ENCODE measurements at regions of chr4 and their contacts with region 1.

Region 1: DNA sequence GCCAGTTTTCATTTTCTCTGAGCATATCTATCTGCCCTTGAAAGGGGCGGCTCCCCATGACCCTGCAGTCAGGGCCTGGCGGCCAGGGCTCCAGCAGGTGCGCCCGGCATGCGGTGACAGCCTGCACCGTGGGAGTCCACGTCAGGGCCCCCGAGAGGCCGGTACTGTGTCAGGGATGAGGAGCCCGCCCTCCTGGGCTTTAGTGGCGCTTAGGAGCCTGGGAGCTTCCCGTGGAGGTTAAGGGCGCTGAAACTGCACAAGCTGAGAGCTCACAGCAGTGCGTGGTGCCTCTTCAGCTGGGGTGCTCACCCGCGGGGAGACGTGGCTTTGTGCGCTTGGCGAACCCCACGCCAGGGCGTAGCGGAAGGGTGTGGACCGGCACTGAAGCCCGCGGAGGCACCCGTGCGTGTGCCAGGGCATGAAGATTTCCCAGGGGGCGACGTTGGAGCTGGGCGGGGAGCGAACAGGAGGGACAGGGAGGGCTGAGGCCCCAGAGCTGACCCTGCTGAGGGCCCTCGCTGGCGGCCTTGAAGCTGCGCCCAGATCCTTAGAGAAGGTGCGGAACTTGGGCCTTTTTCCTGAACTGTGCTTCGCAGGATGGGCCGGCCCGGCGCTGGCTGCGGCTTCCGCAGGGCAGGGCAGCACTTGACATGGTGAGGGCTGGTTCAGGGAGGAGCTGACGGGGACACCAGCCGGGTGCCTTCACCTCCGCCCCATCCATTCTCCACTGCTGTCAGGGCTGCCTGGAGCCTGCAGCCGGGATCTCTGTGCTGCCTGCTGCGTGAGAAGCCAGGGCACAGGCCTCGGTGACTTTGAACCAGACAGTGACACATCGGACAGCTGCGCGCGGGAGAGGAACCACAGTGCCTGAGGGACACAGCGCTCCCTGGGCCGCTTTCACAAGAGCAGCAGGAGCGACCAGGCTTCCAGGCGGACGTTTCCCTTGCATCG is 32.9 kb downstream of the HTT-AS start:
- DNase-seq: peak; percentile 68 to 74
- H3K4me3 ChIP-seq: peak overlapping the region; percentile 50; the same call in 1 of the 2 replicates
- H3K27ac ChIP-seq: no peak overlapping the region
- H3K4me1 ChIP-seq: 0 out of 2 replicates have a peak, but pooled peaks cover 5% of the 10 kb centered on the region
- H3K27me3 ChIP-seq: no peaks in the 10 kb centered on the region
- CTCF ChIP-seq: no peak; the same call in 1 of the 2 replicates

Region 2: DNA sequence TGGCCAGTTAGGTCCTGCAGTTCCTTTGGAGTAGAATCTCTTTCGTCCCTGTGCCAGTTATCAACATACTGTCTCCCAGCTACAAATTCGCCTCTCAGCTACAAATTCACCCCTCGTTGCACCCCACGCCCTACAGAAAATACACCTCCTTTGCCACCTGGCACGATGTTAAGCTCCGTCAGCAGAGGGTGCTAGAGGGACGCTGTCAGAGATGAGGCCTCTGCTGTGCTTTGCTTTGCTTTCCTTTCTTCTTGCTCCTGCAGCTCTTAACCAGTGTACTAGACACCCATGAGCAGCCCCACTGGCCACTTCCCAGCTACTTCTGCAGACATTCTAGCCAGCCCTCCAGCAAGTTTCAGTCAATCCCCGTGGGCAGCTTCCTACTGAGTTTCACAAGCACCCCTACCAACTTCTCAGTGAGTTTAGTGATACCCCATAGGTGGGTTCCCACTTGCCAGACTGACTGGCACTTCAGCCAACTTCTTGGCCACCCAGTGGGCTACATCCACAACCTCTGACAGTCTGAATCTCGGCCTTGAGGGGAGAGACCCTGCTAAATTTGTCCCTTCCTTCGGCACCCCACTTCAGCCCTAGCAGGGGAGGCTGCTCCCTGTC is 821.3 kb before region 1 on chr4:
- CTCF ChIA-PET with region 1: no interaction called
- POLR2A ChIA-PET with region 1: no interaction called
- intact Hi-C with region 1: loop called (anchors 2 kb)
- DNase-seq: peak; percentile 60 to 73
- H3K4me3 ChIP-seq: no peak overlapping the region
- H3K27ac ChIP-seq: no peak overlapping the region
- H3K4me1 ChIP-seq: peaks cover 14% of the 10 kb centered on the region
- H3K27me3 ChIP-seq: no peaks in the 10 kb centered on the region
- CTCF ChIP-seq: peak; percentile 89

Region 3: GRCh38 chr4:2484993-2485392 is 556.5 kb before region 1 on chr4:
- CTCF ChIA-PET with region 1: no interaction called
- POLR2A ChIA-PET with region 1: no interaction called
- intact Hi-C with region 1: no loop called
- DNase-seq: no peak
- H3K4me3 ChIP-seq: no peak overlapping the region
- H3K27ac ChIP-seq: no peak overlapping the region
- H3K4me1 ChIP-seq: 0 out of 2 replicates have a peak, but pooled peaks cover 1% of the 10 kb centered on the region
- H3K27me3 ChIP-seq: no peaks in the 10 kb centered on the region
- CTCF ChIP-seq: no peak

Region 4: DNA sequence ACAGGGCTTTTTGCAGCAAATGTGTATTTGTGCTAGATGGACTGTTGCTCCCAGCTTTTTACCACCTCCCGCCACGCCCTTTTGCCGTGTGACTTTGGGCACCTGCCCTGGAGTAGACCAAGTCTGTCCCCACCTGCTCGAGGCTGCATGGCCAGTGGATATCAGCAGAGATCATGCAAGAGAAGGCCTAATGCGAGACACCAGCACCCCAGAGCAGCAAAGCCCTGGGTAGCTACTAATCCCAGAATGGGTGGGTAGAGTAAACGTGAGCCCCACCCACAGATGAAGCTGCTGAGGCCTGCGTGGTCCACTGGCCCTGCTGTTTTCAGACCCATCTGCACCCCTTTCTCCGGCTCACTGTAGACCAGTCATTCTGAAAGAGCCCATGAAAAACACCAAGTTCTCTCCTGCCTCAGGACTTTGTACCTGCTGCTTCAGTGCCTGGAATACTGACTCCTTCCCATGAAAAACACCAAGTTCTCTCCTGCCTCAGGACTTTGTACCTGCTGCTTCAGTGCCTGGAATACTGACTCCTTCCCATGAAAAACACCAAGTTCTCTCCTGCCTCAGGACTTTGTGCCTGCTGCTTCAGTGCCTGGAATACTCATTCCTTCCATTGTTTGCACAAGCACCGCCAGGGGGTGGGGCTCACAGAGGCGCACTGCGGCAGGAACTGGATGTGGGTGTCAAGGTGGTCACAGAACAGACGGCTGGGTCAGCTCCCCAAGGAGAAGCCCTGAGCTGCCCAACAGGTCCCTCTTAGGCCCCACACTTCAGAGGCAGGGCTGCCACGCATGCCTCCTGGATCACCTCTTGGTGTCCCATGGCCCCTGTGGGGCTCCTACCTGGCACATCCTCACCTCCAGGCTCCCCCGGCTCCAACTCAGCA is 280.2 kb before region 1 on chr4:
- CTCF ChIA-PET with region 1: no interaction called
- POLR2A ChIA-PET with region 1: no interaction called
- intact Hi-C with region 1: loop called (anchors 5 kb)
- DNase-seq: peak in 1 of 2 experiments; percentile 57
- H3K4me3 ChIP-seq: no peak overlapping the region
- H3K27ac ChIP-seq: no peak overlapping the region
- H3K4me1 ChIP-seq: no peaks in the 10 kb centered on the region
- H3K27me3 ChIP-seq: no peaks in the 10 kb centered on the region
- CTCF ChIP-seq: no peak

Region 5: GRCh38 chr4:2934813-2935761 is 106.4 kb before region 1 on chr4:
- CTCF ChIA-PET with region 1: interaction called, 4 read pairs
- POLR2A ChIA-PET with region 1: interaction called, 20 read pairs
- intact Hi-C with region 1: no loop called
- DNase-seq: peak; percentile 63 to 94
- H3K4me3 ChIP-seq: peak overlapping the region; percentile 65
- H3K27ac ChIP-seq: peak overlapping the region; percentile 71
- H3K4me1 ChIP-seq: peaks cover 26% of the 10 kb centered on the region
- H3K27me3 ChIP-seq: no peaks in the 10 kb centered on the region
- CTCF ChIP-seq: no peak

Region 6: GRCh38 chr4:2948895-2949765 is 92.3 kb before region 1 on chr4:
- CTCF ChIA-PET with region 1: interaction called, 4 read pairs
- POLR2A ChIA-PET with region 1: no interaction called
- intact Hi-C with region 1: loop called (anchors 1 kb)
- DNase-seq: no peak
- H3K4me3 ChIP-seq: no peak overlapping the region
- H3K27ac ChIP-seq: no peak overlapping the region
- H3K4me1 ChIP-seq: no peaks in the 10 kb centered on the region
- H3K27me3 ChIP-seq: no peaks in the 10 kb centered on the region
- CTCF ChIP-seq: peak; percentile 51; the same call in 1 of the 2 replicates

Region 7: GRCh38 chr4:2963175-2963965 is 78.1 kb before region 1 on chr4 and contains the starts of genes GRK4 and NOP14:
- CTCF ChIA-PET with region 1: interaction called, 4 read pairs
- POLR2A ChIA-PET with region 1: no interaction called
- intact Hi-C with region 1: loop called (anchors 2 kb)
- DNase-seq: peak; percentile 91 to 96
- H3K4me3 ChIP-seq: peak within 1 kb of the TSS; percentile 94
- H3K27ac ChIP-seq: peak within 1 kb of the TSS; percentile 61
- H3K4me1 ChIP-seq: peaks cover 14% of the 10 kb centered on the region
- H3K27me3 ChIP-seq: no peaks in the 10 kb centered on the region
- CTCF ChIP-seq: no peak; the same call in 1 of the 2 replicates
- total RNA-seq, gene GRK4: 3.1 and 4.4 TPM in 2 replicates
- total RNA-seq, gene NOP14: 30.9 and 33.6 TPM in 2 replicates

Region 8: DNA sequence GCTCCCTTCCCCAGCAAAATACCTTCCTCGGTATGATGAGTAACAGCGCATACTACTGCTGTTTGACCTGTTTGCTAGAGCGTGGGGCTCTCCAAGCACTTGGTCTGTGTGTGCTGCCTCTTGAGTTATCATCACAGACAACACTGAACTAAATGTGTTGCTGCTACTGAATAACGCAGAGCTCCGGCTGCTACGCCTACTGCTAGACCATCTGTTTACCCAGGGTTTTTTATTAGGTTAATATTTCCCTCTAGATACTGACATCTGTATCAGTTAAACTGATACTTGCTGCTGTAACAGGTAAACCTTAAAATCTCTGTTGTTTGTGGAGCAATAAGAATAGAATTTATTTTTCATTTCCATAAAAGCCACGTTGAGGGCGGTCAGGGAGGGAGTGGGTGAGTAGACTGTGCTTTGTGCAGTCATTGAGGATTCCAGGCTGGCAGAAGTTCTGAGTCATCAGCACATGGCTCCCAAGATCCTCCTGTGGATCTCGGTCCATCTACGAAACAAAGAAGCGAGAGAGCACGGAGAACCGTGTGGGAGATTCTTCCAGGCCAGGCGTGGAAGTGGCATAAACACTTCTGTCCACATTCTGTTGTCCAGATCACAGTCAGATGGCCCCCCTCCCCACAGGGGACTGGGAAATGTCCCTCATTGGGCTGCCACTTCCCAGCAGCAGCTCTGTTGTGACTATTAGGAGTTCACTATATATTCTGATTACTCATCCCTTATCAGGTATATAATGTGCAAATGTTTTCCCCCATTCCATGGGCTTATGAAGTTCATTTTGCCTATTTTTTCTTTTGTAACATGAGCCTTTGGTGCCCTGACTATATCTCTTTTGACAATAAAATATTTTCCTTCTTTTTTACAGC is 64.0 kb before region 1 on chr4:
- CTCF ChIA-PET with region 1: no interaction called
- POLR2A ChIA-PET with region 1: no interaction called
- intact Hi-C with region 1: loop called (anchors 5 kb)
- DNase-seq: no peak
- H3K4me3 ChIP-seq: no peak overlapping the region
- H3K27ac ChIP-seq: no peak overlapping the region
- H3K4me1 ChIP-seq: no peaks in the 10 kb centered on the region
- H3K27me3 ChIP-seq: no peaks in the 10 kb centered on the region
- CTCF ChIP-seq: no peak

Region 9: GRCh38 chr4:3017504-3017903 is 24.0 kb before region 1 on chr4:
- CTCF ChIA-PET with region 1: no interaction called
- POLR2A ChIA-PET with region 1: no interaction called
- intact Hi-C with region 1: no loop called
- DNase-seq: no peak
- H3K4me3 ChIP-seq: no peak overlapping the region
- H3K27ac ChIP-seq: no peak overlapping the region
- H3K4me1 ChIP-seq: no peaks in the 10 kb centered on the region
- H3K27me3 ChIP-seq: no peaks in the 10 kb centered on the region
- CTCF ChIP-seq: no peak

Measured in PC-9 (cell line).